Psoas muscle (tissue), 8 donors: ENCODE measurements at regions of chr7 and their contacts with region 1.

Region 1: GRCh38 chr7:101856473-101857357 is 39.3 kb downstream of the CUX1 start:
- DNase-seq: peak; percentile 87 to 95
- ATAC-seq: peak; percentile 90 to 95 (median 92)
- H3K4me3 ChIP-seq: peak overlapping the region; percentile 48
- H3K27ac ChIP-seq: peak overlapping the region; percentile 79
- H3K4me1 ChIP-seq: peaks cover 60% of the 10 kb centered on the region
- H3K27me3 ChIP-seq: no peaks in the 10 kb centered on the region
- CTCF ChIP-seq: peak; percentile 48

Region 2: DNA sequence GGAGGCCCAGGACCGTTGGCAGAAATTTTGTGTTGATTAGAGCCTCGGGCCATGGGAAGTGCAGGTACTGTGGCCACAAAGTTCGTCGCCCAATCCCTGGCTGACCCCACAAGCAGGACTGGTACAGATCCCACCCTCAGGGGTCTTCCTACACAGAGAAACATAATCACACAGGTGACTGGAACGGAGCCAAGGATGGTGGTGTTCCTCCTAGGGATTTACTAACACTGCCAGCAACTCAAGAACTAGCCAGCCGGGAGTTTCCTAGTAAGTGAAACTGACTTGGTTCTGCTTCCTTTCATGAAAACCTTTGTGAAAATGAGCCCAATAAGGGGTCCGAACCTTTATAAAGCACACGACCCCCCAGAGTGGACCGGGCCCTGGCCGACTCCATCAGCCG is 33.6 kb before region 1 on chr7:
- intact Hi-C with region 1: loop called (anchors 1 to 5 kb)
- DNase-seq: peak in 1 of 2 donors; percentile 18
- ATAC-seq: peak; percentile 14 to 36 (median 28)
- H3K4me3 ChIP-seq: peak overlapping the region; percentile 10
- H3K27ac ChIP-seq: peak overlapping the region; percentile 57
- H3K4me1 ChIP-seq: peaks cover 50% of the 10 kb centered on the region
- H3K27me3 ChIP-seq: no peaks in the 10 kb centered on the region
- CTCF ChIP-seq: no peak

Region 3: GRCh38 chr7:101884671-101885596 is 28.2 kb after region 1 on chr7:
- intact Hi-C with region 1: loop called in 1 of 2 experiments (anchors 2 kb)
- DNase-seq: no peak
- ATAC-seq: no peak
- H3K4me3 ChIP-seq: no peak overlapping the region
- H3K27ac ChIP-seq: peak overlapping the region; percentile 94
- H3K4me1 ChIP-seq: peaks cover 68% of the 10 kb centered on the region
- H3K27me3 ChIP-seq: no peaks in the 10 kb centered on the region
- CTCF ChIP-seq: no peak

Region 4: GRCh38 chr7:101941481-101942383 is 85.0 kb after region 1 on chr7:
- intact Hi-C with region 1: no loop called
- DNase-seq: no peak
- ATAC-seq: peak; percentile 52 to 74 (median 63)
- H3K4me3 ChIP-seq: no peak overlapping the region
- H3K27ac ChIP-seq: peak overlapping the region; percentile 58
- H3K4me1 ChIP-seq: peaks cover 70% of the 10 kb centered on the region
- H3K27me3 ChIP-seq: no peaks in the 10 kb centered on the region
- CTCF ChIP-seq: no peak